ENCODE measurements at regions of chr17 and their contacts with region 1.

Region 1: GRCh38 chr17:42677008-42677857 is 439 bp upstream of the PLEKHH3 start:
- DNase-seq: peak; percentile 99 to 100 (median 100)

Region 2: GRCh38 chr17:42266918-42267778 is 410.1 kb before region 1 on chr17:
- intact Hi-C with region 1: no loop called
- DNase-seq: no peak

Region 3: DNA sequence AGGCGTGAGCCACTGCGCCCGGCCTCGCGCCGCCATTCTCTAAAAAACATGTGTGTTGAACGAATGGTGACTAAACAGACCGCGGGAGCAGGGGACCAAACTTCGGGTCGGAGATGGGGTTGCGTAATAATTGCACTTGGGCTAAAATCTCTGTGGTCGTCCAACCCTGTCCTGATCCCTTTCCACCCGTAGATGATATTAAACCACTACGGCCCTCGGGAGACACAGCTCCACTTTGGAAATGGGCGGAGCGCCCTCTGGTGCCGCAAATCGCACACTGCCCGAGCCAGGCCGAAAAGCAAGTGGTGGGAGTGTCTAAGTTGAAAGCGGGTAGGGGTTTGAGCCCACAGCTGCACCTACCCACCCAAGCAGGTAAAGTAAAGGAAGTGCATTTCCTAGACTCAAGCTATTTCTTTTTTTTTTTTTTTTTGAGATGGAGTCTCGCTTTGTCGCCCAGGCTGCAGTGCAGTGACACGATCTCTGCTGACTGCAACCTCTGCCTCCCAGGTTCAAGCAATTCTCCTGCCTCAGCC is 271.2 kb before region 1 on chr17:
- intact Hi-C with region 1: loop called (anchors 5 kb)
- DNase-seq: peak; percentile 74 to 97 (median 84)

Region 4: DNA sequence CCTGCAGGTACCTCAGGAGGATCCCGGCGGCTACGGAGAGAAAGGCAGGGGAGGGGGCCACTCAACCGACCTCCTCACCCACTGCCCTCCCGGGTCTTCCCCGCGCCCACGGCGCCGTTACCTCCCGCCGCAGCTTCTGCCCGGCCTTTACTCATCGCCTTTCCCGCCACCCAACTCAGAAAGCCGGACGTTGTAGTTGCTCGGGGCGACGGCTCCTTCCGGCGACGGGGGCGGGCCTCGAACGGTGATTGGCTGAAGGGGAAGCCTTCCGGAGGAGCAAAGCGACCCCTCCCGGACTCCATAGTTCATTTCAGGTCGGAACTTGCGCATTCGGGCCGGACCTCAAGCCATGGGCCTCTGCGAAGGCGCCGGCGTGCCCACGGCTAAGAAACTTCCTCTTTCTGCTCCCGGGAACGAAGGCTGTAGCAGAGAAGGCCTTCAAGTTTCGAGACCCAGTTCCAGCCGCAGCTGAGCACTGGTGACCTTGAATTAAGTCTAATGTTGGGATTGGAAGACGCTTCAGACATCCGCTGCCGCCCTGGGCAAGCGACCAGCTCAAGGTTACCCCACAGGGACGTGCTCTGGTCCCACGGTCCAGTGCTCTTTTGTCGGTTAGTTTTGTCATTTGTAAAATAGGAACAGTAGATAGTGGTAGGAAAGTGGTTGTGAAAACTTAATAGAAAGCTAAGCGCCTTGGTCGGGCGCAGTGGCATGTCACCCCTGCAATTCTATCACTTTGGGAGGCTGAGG is 99.5 kb before region 1 on chr17 and contains the start of gene PSMC3IP:
- intact Hi-C with region 1: loop called (anchors 2 kb)
- DNase-seq: peak; percentile 92 to 99 (median 96)

Region 5: GRCh38 chr17:42609182-42609813 is 67.9 kb before region 1 on chr17 and contains the starts of genes RETREG3 and TUBG1:
- intact Hi-C with region 1: loop called (anchors 1 kb)
- DNase-seq: peak; percentile 96 to 100 (median 98)

Region 6: DNA sequence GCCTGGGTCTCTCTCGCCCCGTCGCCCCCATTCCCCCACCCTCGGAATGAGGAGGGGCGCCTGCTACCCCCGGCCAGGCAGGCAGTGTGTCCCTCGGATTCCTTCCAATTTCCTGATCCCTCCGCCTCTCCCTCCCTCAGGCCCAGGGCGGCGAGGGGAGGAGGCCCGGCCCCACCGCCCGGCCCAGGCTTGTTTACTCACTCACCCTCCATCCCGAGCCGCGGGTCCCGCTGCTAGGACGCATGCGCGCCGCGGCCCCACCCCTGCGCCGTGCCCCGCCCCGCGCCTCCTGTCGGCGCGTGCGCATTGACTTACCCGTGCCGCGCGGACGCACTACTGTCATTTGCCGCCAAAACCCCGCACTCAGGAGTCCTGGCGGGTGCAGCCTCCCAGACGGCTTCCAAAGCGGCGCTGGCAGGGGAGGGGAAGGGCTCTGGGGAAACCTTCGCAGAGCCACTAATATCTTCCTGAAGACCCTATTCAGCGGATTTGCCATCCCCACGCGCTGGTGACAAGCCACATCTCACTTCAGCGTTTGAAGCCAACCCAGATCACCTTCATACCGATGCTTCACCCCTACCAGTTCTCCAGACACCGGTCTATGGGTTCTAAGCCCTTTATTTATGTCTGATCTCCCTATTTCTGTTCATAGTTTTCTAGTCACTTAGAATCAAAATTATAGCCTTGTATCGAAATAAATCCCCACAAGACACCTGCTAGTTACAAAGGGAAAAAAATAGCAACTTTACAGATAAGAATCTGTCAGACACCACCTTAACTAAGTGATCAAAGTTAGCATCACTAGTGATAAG is 67.8 kb after region 1 on chr17 and contains the start of gene EZH1:
- intact Hi-C with region 1: no loop called
- DNase-seq: peak; percentile 81 to 98 (median 88)